GM12878 (cell line): ENCODE measurements at regions of chr10 and their contacts with region 1.

Region 1: DNA sequence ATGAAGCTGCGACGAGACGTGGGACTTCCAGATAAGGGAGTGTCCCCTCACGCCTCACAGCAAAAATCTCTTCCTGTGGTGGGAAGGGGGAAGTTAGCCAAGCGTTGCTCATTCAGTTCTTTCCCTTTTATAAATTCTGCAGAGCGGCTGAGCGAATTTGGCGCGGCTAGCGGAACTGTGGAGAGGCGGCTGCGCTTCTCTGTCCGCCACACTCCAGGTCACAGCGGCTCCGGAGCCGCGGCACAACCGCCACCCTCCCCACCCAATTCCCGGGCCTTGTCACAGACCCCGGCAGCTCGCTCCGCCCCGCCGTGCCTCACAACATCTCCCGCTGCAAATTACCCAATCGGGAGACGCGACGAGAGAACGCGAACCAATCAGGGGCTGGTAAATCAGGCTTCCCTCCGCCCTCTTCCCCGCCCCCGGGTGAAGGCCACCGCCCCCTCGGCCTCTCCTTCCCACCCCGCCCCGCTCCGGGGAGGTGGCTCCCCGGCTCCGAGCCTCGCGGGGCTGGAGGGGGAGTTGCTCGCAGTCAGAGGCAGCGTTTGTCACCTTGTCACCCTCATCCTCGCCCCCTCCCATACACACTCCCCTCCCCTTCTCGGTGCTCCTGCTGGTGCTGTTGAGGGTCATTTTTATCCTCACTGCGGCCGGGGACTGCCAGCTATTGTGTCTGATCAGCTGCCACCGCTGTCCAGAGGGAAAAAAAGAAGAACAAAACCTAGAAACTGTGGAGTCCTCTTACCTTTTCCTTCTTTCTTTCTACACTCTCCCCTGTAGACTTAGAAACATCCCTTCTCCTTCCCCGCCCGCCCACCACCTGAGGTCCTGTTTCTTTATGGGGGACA is 918 bp upstream of the ARHGAP21 start:
- DNase-seq: peak; percentile 90
- ATAC-seq: peak; percentile 87
- H3K4me3 ChIP-seq: peak overlapping the region; percentile 88
- H3K27ac ChIP-seq: peak overlapping the region; percentile 51
- H3K4me1 ChIP-seq: peaks cover 6% of the 10 kb centered on the region; the same call in 1 of the 2 replicates
- H3K27me3 ChIP-seq: no peaks in the 10 kb centered on the region
- CTCF ChIP-seq: no peak
- EP300 ChIP-seq: no peak
- POLR2A ChIP-seq: peak; percentile 89
- RAD21 ChIP-seq: peak; percentile 4; the same call in 1 of the 2 replicates

Region 2: GRCh38 chr10:23870651-23871610 is 853.7 kb before region 1 on chr10:
- CTCF ChIA-PET with region 1: no interaction called
- POLR2A ChIA-PET with region 1: no interaction called
- RAD21 ChIA-PET with region 1: no interaction called
- SMC1A ChIA-PET with region 1: no interaction called
- in situ Hi-C with region 1: no loop called
- intact Hi-C with region 1: no loop called
- DNase-seq: no peak
- ATAC-seq: no peak
- H3K4me3 ChIP-seq: no peak overlapping the region
- H3K27ac ChIP-seq: no peak overlapping the region
- H3K4me1 ChIP-seq: no peaks in the 10 kb centered on the region
- H3K27me3 ChIP-seq: no peaks in the 10 kb centered on the region
- CTCF ChIP-seq: no peak
- EP300 ChIP-seq: no peak
- POLR2A ChIP-seq: no peak
- RAD21 ChIP-seq: no peak

Region 3: GRCh38 chr10:24202181-24202570 is 522.4 kb before region 1 on chr10:
- CTCF ChIA-PET with region 1: no interaction called
- POLR2A ChIA-PET with region 1: no interaction called
- RAD21 ChIA-PET with region 1: no interaction called
- SMC1A ChIA-PET with region 1: no interaction called
- in situ Hi-C with region 1: no loop called
- intact Hi-C with region 1: no loop called
- DNase-seq: no peak
- ATAC-seq: peak; percentile 17; the same call in 2 of the 3 replicates
- H3K4me3 ChIP-seq: no peak overlapping the region
- H3K27ac ChIP-seq: no peak overlapping the region
- H3K4me1 ChIP-seq: peaks cover 6% of the 10 kb centered on the region
- H3K27me3 ChIP-seq: no peaks in the 10 kb centered on the region
- CTCF ChIP-seq: no peak
- EP300 ChIP-seq: no peak
- POLR2A ChIP-seq: no peak
- RAD21 ChIP-seq: no peak

Region 4: GRCh38 chr10:24642622-24643417 is 81.8 kb before region 1 on chr10:
- CTCF ChIA-PET with region 1: interaction called, 13 read pairs
- POLR2A ChIA-PET with region 1: interaction called, 28 read pairs
- RAD21 ChIA-PET with region 1: interaction called, 15 read pairs
- SMC1A ChIA-PET with region 1: interaction called, 24 read pairs
- in situ Hi-C with region 1: no loop called
- intact Hi-C with region 1: loop called (anchors 2 kb)
- DNase-seq: peak; percentile 40
- ATAC-seq: peak; percentile 86
- H3K4me3 ChIP-seq: no peak overlapping the region
- H3K27ac ChIP-seq: no peak overlapping the region
- H3K4me1 ChIP-seq: peaks cover 14% of the 10 kb centered on the region
- H3K27me3 ChIP-seq: no peaks in the 10 kb centered on the region
- CTCF ChIP-seq: peak; percentile 74 to 85 (median 83)
- EP300 ChIP-seq: no peak
- POLR2A ChIP-seq: no peak
- RAD21 ChIP-seq: peak; percentile 96

Region 5: GRCh38 chr10:24826019-24826418 is 101.4 kb after region 1 on chr10:
- CTCF ChIA-PET with region 1: interaction called, 3 read pairs
- POLR2A ChIA-PET with region 1: interaction called, 3 read pairs
- RAD21 ChIA-PET with region 1: interaction called, 6 read pairs
- SMC1A ChIA-PET with region 1: interaction called, 11 read pairs
- in situ Hi-C with region 1: no loop called
- intact Hi-C with region 1: no loop called
- DNase-seq: no peak
- ATAC-seq: peak; percentile 60
- H3K4me3 ChIP-seq: no peak overlapping the region
- H3K27ac ChIP-seq: no peak overlapping the region
- H3K4me1 ChIP-seq: no peaks in the 10 kb centered on the region; the same call in 1 of the 2 replicates
- H3K27me3 ChIP-seq: no peaks in the 10 kb centered on the region
- CTCF ChIP-seq: no peak
- EP300 ChIP-seq: no peak
- POLR2A ChIP-seq: no peak
- RAD21 ChIP-seq: no peak

Region 6: DNA sequence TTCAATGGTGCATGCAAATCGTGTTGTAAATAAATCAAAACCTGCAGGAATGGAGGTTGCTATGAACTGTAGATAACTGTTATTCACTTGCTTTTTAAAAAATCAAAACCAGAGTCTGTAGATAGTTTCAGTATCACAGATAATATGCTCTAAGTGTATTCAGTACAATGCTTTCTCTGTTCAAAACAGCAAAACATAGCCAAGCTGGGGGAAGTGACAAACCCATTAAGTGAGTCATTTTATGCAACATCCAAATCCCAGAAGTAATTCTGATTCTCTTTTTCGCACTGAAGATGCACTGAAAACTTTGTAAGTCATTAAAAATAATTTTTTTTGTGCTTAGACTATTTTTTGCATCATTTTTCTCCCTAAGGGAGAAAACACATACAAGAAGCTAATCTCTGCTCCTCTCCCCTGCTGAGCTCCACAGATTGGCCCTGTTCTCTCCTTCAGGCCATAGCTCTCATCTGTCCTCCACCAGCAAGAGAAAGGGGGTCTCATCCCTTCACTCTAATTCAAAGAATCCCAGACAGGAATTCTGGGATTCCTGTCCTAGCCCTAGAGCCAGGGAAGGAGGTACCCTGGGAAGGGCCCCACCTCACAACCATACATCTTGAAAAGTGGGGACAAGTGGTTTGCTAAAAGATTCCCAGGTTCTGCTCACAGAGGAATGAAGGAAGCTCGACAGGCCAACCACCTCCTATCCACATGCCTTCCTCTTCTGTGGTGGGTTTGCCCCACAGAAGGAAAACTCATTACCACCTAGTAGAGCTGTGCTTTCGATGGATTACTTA is 222.9 kb after region 1 on chr10:
- CTCF ChIA-PET with region 1: interaction called, 8 read pairs
- POLR2A ChIA-PET with region 1: interaction called, 10 read pairs
- RAD21 ChIA-PET with region 1: interaction called, 32 read pairs
- SMC1A ChIA-PET with region 1: interaction called, 51 read pairs
- in situ Hi-C with region 1: no loop called
- intact Hi-C with region 1: loop called (anchors 5 kb)
- DNase-seq: peak; percentile 51
- ATAC-seq: peak; percentile 79
- H3K4me3 ChIP-seq: no peak overlapping the region
- H3K27ac ChIP-seq: no peak overlapping the region
- H3K4me1 ChIP-seq: peaks cover 3% of the 10 kb centered on the region; the same call in 1 of the 2 replicates
- H3K27me3 ChIP-seq: no peaks in the 10 kb centered on the region
- CTCF ChIP-seq: no peak
- EP300 ChIP-seq: peak; percentile 82 to 87; a peak in 3 of 4 replicates
- POLR2A ChIP-seq: no peak
- RAD21 ChIP-seq: no peak

Region 7: DNA sequence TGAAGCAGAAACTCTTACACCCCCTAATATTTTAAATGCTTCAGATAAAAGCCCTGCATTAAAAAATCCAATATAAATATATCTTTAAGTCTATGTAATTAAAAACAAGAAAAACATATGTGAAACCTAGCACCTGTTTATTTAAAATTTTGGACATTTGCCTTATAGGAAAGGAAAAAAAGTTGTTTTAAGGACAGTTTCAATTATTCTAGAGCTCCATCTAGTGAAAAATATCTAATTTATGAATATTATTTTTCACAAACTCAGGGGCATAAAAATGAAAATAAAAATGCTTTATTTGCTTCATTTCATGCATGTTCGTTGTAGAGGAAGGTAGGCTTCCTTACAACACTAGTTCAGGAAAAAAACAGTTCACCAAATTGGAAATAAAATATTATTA is 265.3 kb after region 1 on chr10:
- CTCF ChIA-PET with region 1: interaction called, 35 read pairs
- POLR2A ChIA-PET with region 1: interaction called, 3 read pairs
- RAD21 ChIA-PET with region 1: interaction called, 6 read pairs
- SMC1A ChIA-PET with region 1: interaction called, 20 read pairs
- in situ Hi-C with region 1: no loop called
- intact Hi-C with region 1: loop called (anchors 5 kb)
- DNase-seq: no peak
- ATAC-seq: no peak
- H3K4me3 ChIP-seq: no peak overlapping the region
- H3K27ac ChIP-seq: no peak overlapping the region
- H3K4me1 ChIP-seq: no peaks in the 10 kb centered on the region
- H3K27me3 ChIP-seq: no peaks in the 10 kb centered on the region
- CTCF ChIP-seq: no peak; a peak in 1 of 6 replicates
- EP300 ChIP-seq: no peak
- POLR2A ChIP-seq: no peak
- RAD21 ChIP-seq: peak; percentile 8; the same call in 1 of the 2 replicates